ENCODE measurements at regions of chr6 and their contacts with region 1.

Region 1: DNA sequence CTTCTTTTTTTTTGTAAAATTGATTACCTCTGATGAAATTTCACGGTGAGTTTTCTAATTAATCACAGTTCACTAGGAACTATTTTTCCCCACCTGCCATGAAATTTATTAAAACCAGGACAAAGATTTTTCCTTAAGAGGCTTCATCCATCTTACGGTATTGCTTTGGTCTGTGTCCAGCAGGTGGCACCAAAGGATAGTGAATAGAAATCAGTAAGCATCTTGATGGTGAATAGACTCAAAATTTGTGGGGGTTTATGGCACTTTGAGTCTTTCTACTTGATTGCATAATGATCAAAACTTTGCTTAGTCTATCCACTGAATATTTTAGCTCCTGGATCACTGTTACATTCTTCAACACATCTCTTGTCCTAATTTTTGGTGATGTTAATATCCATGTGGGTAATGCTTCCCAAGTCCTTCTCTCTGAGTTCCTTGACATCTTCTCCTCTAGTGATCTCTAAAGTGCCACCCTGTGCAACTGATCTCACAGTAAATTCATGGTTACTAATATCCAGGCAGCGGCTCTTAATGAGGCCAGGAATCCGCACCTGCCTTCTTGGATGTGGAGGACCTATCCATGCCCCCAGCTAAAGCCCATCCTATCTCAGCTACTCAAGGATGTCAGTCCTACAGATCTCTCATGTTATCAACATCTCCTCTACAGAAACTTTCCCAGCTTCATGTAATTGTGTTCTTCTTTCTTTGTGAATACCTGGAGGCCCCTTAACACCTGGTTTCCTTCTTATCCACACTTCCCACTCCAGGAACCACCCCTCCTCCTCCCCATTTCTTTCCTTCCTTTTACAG is 54.5 kb downstream of the STMND1 start:
- DNase-seq: peak; percentile 76
- ATAC-seq: peak; percentile 61
- H3K4me3 Mint-ChIP-seq: no peak overlapping the region
- H3K27ac Mint-ChIP-seq: no peak overlapping the region
- H3K4me1 Mint-ChIP-seq: no peaks in the 10 kb centered on the region
- H3K27me3 Mint-ChIP-seq: peaks cover 11% of the 10 kb centered on the region

Region 2: GRCh38 chr6:17066610-17067009 is 89.7 kb before region 1 on chr6:
- CTCF ChIA-PET with region 1: no interaction called
- POLR2A ChIA-PET with region 1: no interaction called
- intact Hi-C with region 1: no loop called
- DNase-seq: no peak
- ATAC-seq: no peak
- H3K4me3 Mint-ChIP-seq: no peak overlapping the region
- H3K27ac Mint-ChIP-seq: no peak overlapping the region
- H3K4me1 Mint-ChIP-seq: no peaks in the 10 kb centered on the region
- H3K27me3 Mint-ChIP-seq: peaks cover 13% of the 10 kb centered on the region

Region 3: GRCh38 chr6:17130786-17131185 is 25.5 kb before region 1 on chr6:
- CTCF ChIA-PET with region 1: no interaction called
- POLR2A ChIA-PET with region 1: no interaction called
- intact Hi-C with region 1: no loop called
- DNase-seq: no peak
- ATAC-seq: no peak
- H3K4me3 Mint-ChIP-seq: no peak overlapping the region
- H3K27ac Mint-ChIP-seq: no peak overlapping the region
- H3K4me1 Mint-ChIP-seq: no peaks in the 10 kb centered on the region
- H3K27me3 Mint-ChIP-seq: peaks cover 11% of the 10 kb centered on the region

Region 4: GRCh38 chr6:17565399-17565798 is 409.1 kb after region 1 on chr6:
- CTCF ChIA-PET with region 1: no interaction called
- POLR2A ChIA-PET with region 1: no interaction called
- intact Hi-C with region 1: no loop called
- DNase-seq: no peak
- ATAC-seq: no peak
- H3K4me3 Mint-ChIP-seq: no peak overlapping the region
- H3K27ac Mint-ChIP-seq: no peak overlapping the region
- H3K4me1 Mint-ChIP-seq: no peaks in the 10 kb centered on the region
- H3K27me3 Mint-ChIP-seq: peaks cover 3% of the 10 kb centered on the region

Region 5: DNA sequence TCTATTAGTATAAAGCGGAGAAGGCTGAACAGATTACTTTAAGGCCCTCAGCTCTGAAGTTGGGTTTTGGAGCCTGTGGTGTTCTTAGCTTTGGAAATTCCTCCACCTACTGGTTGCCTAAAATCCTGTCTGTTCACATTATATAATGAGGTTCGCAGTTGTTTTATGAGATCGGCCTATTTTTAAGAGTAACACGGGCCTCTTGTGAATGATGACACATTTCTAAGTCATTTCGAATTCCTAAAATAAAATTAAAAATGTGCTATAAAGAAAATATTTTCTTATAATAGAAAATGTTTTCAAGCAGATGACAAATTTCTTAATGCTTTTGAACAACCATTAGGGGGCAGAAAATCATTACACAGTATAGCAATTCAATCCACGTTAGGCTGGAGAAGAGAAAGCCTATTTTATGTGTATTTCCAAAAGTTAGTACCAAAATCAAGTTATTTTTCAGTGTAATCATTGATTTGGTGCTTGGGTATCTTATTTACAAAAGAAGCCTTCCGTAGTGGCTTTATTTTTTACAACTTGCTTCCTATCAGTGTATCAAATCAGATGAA is 428.0 kb after region 1 on chr6:
- CTCF ChIA-PET with region 1: interaction called, 6 read pairs
- POLR2A ChIA-PET with region 1: no interaction called
- intact Hi-C with region 1: loop called (anchors 1 kb)
- DNase-seq: no peak
- ATAC-seq: peak; percentile 56
- H3K4me3 Mint-ChIP-seq: no peak overlapping the region
- H3K27ac Mint-ChIP-seq: no peak overlapping the region
- H3K4me1 Mint-ChIP-seq: peaks cover 12% of the 10 kb centered on the region
- H3K27me3 Mint-ChIP-seq: peaks cover 5% of the 10 kb centered on the region

Region 6: DNA sequence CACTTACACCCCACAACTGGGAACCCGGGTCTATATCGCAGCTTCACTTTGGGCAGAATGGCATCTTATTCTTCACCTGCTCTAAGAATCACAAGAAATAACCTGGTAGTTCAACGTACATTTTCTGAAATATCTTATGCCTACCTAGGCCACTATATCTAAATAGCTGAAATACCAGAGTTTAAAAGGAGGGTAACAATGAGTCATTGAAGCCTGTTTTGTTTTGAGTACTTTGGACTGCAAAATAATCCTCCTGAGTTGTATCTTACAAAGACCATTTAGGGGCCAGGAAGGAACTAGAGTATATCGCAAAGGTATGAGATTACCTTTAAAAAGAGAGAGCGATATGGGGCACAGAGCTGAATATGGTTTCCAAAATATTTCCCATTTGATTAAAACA is 647.1 kb after region 1 on chr6:
- CTCF ChIA-PET with region 1: interaction called, 4 read pairs
- POLR2A ChIA-PET with region 1: no interaction called
- intact Hi-C with region 1: loop called (anchors 1 to 5 kb)
- DNase-seq: no peak
- ATAC-seq: no peak
- H3K4me3 Mint-ChIP-seq: no peak overlapping the region
- H3K27ac Mint-ChIP-seq: no peak overlapping the region
- H3K4me1 Mint-ChIP-seq: no peaks in the 10 kb centered on the region
- H3K27me3 Mint-ChIP-seq: peaks cover 7% of the 10 kb centered on the region

Region 7: DNA sequence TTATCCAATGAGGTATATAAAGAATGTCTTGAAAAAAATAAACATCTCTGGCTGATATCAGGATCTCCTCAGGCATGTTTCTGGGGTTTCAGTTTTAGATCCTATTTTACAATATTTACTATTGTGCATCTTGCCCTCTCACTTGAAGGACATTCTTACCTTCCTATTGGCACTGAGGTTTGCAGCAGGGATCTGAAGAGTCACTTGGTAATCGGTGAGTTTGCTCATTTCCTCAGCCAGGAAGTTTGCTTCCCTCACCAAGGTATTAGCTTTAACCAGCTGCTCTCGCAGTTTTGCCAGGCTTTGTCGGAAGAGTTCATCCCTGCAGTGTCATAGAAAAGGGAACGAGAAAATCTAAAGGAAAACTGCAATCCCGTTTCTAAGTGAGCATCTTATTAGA is 652.3 kb after region 1 on chr6:
- CTCF ChIA-PET with region 1: interaction called, 5 read pairs
- POLR2A ChIA-PET with region 1: no interaction called
- intact Hi-C with region 1: loop called (anchors 1 to 5 kb)
- DNase-seq: no peak
- ATAC-seq: no peak
- H3K4me3 Mint-ChIP-seq: no peak overlapping the region
- H3K27ac Mint-ChIP-seq: no peak overlapping the region
- H3K4me1 Mint-ChIP-seq: no peaks in the 10 kb centered on the region
- H3K27me3 Mint-ChIP-seq: peaks cover 9% of the 10 kb centered on the region

Region 8: DNA sequence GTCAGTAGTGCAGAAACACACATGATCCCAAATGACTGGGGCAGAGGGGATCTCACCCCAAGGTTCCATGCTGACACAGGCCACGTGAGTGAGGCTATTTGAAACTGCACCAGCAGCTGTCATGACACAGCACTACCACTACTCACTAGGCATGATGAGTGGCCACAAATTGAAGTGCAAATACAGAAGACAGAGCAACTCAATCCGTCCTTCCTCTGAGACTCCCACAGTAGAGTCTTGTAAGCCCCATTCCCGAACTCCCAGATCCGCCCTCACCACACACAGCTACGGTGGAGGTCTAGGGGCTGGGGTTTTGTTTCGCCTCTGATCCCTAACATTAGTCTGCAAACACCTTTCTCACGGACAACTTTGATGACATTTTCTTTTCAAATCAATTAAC is 663.7 kb after region 1 on chr6:
- CTCF ChIA-PET with region 1: interaction called, 4 read pairs
- POLR2A ChIA-PET with region 1: no interaction called
- intact Hi-C with region 1: loop called (anchors 1 to 5 kb)
- DNase-seq: no peak
- ATAC-seq: no peak
- H3K4me3 Mint-ChIP-seq: no peak overlapping the region
- H3K27ac Mint-ChIP-seq: no peak overlapping the region
- H3K4me1 Mint-ChIP-seq: no peaks in the 10 kb centered on the region
- H3K27me3 Mint-ChIP-seq: peaks cover 3% of the 10 kb centered on the region

Region 9: DNA sequence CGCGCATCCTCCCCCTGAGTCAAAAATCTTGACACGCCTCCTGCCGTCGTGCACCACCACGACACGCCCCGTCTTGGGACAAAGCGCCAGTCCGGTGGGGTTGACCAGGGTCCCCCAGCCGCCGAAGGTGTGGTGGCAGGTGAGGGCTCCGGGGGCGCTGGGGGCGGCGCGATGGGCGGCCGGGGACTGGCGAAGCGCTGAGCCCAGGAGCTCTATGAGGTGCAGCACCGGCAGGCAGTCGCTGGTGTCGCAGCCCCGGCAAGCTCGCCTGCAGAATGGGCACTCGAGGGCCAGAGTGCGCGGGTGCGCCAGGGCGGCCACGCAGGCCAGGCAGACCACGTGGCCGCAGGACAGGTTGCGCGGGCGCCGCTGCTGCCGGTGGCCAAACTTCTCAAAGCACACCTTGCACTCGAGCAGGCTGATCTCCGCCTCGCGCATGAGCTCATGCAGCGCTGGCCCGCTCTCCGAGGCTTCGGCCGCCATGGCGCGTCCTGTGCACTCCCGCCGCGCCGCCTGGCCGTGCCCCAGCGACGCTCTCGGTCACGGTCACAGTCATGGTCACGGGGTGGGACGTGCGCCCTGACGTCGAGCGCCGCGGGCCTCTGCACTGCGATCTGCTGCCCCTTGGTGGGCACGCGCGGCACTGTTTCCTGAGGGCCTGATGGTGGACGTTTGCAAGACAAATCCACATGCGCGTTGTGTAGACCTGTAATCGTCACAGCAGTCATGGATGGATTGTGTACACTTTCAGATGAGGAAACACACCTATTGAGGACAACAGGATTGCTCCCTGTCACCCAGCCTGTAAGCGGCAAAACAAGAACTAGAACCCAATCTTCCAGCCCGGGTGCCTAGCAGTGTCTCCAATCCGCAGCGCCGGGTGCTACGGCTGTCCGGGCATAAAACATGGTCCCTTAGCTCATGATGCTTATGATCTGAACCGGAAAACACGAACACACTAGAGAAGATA is 966.1 kb after region 1 on chr6 and contains the start of gene NHLRC1:
- CTCF ChIA-PET with region 1: no interaction called
- POLR2A ChIA-PET with region 1: no interaction called
- intact Hi-C with region 1: loop called in 1 of 2 experiments (anchors 1 kb)
- DNase-seq: peak; percentile 87
- ATAC-seq: peak; percentile 96
- H3K4me3 Mint-ChIP-seq: peak within 1 kb of the TSS; percentile 68
- H3K27ac Mint-ChIP-seq: peak within 1 kb of the TSS; percentile 23
- H3K4me1 Mint-ChIP-seq: peaks cover 11% of the 10 kb centered on the region
- H3K27me3 Mint-ChIP-seq: peaks cover 39% of the 10 kb centered on the region
- total RNA-seq, gene NHLRC1: 0.11 to 0.16 TPM

Region 10: GRCh38 chr6:18503593-18504231 is 1347.4 kb after region 1 on chr6:
- CTCF ChIA-PET with region 1: no interaction called
- POLR2A ChIA-PET with region 1: no interaction called
- intact Hi-C with region 1: loop called in 1 of 2 experiments (anchors 5 kb)
- DNase-seq: peak; percentile 55
- ATAC-seq: peak; percentile 68
- H3K4me3 Mint-ChIP-seq: no peak overlapping the region
- H3K27ac Mint-ChIP-seq: no peak overlapping the region
- H3K4me1 Mint-ChIP-seq: peaks cover 6% of the 10 kb centered on the region
- H3K27me3 Mint-ChIP-seq: peaks cover 7% of the 10 kb centered on the region

Measured in activated CD4-positive, alpha-beta T cell treated with anti-CD3 and anti-CD28 coated beads for 36 hours (primary cell).